ENCODE measurements at regions of chr16 and their contacts with region 1.

Region 1: DNA sequence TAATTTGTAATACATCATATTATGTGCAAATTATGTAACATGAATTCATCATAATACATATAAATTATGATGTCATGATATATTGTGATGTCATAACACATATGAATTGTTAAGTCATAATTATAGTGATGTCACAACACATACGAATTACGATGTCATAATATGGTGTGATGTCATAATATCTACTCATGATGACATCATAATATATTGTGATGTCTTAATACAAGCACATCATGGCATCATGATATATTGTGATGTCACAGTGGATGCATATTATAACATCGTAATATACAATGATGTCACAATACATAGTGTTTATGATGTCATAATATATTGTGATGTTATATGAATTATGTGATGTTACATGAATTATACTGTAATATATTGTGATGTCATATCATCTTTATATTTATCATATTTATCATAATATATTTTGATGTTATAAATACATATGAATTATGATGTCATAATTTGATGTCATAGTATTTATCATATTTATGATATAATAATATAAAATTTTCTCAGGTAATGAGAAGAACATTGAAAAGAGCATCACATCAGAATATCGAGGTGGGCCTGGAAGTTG is 1793.0 kb downstream of the TP53TG3F start:
- DNase-seq: no peak
- H3K4me3 ChIP-seq: no peak overlapping the region
- H3K27ac ChIP-seq: no peak overlapping the region
- H3K4me1 ChIP-seq: no peaks in the 10 kb centered on the region
- H3K27me3 ChIP-seq: no peaks in the 10 kb centered on the region
- CTCF ChIP-seq: no peak

Region 2: GRCh38 chr16:35305476-35305875 is 53.0 kb after region 1 on chr16:
- CTCF ChIA-PET with region 1: no interaction called
- POLR2A ChIA-PET with region 1: no interaction called
- intact Hi-C with region 1: loop called (anchors 10 kb)
- DNase-seq: no peak
- H3K4me3 ChIP-seq: no peak overlapping the region
- H3K27ac ChIP-seq: no peak overlapping the region
- H3K4me1 ChIP-seq: no peaks in the 10 kb centered on the region
- H3K27me3 ChIP-seq: no peaks in the 10 kb centered on the region
- CTCF ChIP-seq: no peak

Measured in A673 (cell line).